GM12878 (cell line): ENCODE measurements at regions of chr17 and their contacts with region 1.

Region 1: GRCh38 chr17:3738562-3739295 is 15.0 kb downstream of the HASPIN start:
- DNase-seq: no peak
- ATAC-seq: peak; percentile 82
- H3K4me3 ChIP-seq: no peak overlapping the region
- H3K27ac ChIP-seq: no peak overlapping the region
- H3K4me1 ChIP-seq: 0 out of 2 replicates have a peak, but pooled peaks cover 2% of the 10 kb centered on the region
- H3K27me3 ChIP-seq: no peaks in the 10 kb centered on the region
- CTCF ChIP-seq: no peak
- EP300 ChIP-seq: no peak
- POLR2A ChIP-seq: no peak
- RAD21 ChIP-seq: no peak

Region 2: DNA sequence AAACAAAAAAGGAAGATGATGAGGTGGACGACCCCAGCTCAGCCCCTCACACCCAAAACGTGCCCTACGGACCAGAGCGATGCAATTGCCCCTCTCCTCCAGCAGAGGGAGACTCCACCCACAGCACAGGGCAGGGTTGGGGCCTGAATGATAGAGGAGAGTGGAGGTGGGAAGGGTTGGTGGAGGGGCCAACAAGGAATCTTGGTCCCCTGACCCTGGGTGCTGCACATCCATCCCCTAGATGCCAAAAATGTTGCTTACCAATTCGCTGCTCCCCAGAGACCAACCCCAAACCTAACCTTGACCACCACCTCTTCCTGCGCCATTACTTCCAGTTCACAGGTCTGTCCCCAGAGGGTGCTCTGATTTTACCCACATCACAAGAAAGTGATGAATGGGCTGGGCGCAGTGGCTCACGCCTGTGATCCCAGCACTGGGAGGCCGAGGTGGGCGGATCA is 55.6 kb before region 1 on chr17:
- CTCF ChIA-PET with region 1: interaction called, 105 read pairs
- POLR2A ChIA-PET with region 1: no interaction called
- RAD21 ChIA-PET with region 1: interaction called, 24 read pairs
- SMC1A ChIA-PET with region 1: interaction called, 17 read pairs
- in situ Hi-C with region 1: no loop called
- intact Hi-C with region 1: loop called (anchors 2 kb)
- DNase-seq: peak; percentile 48
- ATAC-seq: peak; percentile 95
- H3K4me3 ChIP-seq: no peak overlapping the region
- H3K27ac ChIP-seq: no peak overlapping the region
- H3K4me1 ChIP-seq: peaks cover 6% of the 10 kb centered on the region; the same call in 1 of the 2 replicates
- H3K27me3 ChIP-seq: no peaks in the 10 kb centered on the region
- CTCF ChIP-seq: peak; percentile 85 to 98 (median 94)
- EP300 ChIP-seq: no peak
- POLR2A ChIP-seq: peak; percentile 44; the same call in 1 of the 2 replicates
- RAD21 ChIP-seq: peak; percentile 94

Region 3: GRCh38 chr17:3750926-3751325 is 12.2 kb after region 1 on chr17:
- CTCF ChIA-PET with region 1: interaction called, 19 read pairs
- POLR2A ChIA-PET with region 1: no interaction called
- RAD21 ChIA-PET with region 1: interaction called, 8 read pairs
- SMC1A ChIA-PET with region 1: interaction called, 4 read pairs
- in situ Hi-C with region 1: no loop called
- intact Hi-C with region 1: no loop called
- DNase-seq: no peak
- ATAC-seq: peak; percentile 84
- H3K4me3 ChIP-seq: no peak overlapping the region
- H3K27ac ChIP-seq: no peak overlapping the region
- H3K4me1 ChIP-seq: no peaks in the 10 kb centered on the region; the same call in 1 of the 2 replicates
- H3K27me3 ChIP-seq: no peaks in the 10 kb centered on the region
- CTCF ChIP-seq: no peak
- EP300 ChIP-seq: peak in 1 of 2 experiments; percentile 40; a peak in 1 of 4 replicates
- POLR2A ChIP-seq: no peak
- RAD21 ChIP-seq: no peak

Region 4: GRCh38 chr17:3804503-3804931 is 65.8 kb after region 1 on chr17:
- CTCF ChIA-PET with region 1: interaction called, 32 read pairs
- POLR2A ChIA-PET with region 1: no interaction called
- RAD21 ChIA-PET with region 1: interaction called, 20 read pairs
- SMC1A ChIA-PET with region 1: interaction called, 22 read pairs
- in situ Hi-C with region 1: no loop called
- intact Hi-C with region 1: loop called (anchors 5 kb)
- DNase-seq: peak; percentile 63
- ATAC-seq: peak; percentile 95
- H3K4me3 ChIP-seq: peak overlapping the region; percentile 28; the same call in 1 of the 2 replicates
- H3K27ac ChIP-seq: peak overlapping the region; percentile 67
- H3K4me1 ChIP-seq: peaks cover 18% of the 10 kb centered on the region
- H3K27me3 ChIP-seq: no peaks in the 10 kb centered on the region
- CTCF ChIP-seq: no peak
- EP300 ChIP-seq: no peak
- POLR2A ChIP-seq: no peak
- RAD21 ChIP-seq: no peak

Region 5: DNA sequence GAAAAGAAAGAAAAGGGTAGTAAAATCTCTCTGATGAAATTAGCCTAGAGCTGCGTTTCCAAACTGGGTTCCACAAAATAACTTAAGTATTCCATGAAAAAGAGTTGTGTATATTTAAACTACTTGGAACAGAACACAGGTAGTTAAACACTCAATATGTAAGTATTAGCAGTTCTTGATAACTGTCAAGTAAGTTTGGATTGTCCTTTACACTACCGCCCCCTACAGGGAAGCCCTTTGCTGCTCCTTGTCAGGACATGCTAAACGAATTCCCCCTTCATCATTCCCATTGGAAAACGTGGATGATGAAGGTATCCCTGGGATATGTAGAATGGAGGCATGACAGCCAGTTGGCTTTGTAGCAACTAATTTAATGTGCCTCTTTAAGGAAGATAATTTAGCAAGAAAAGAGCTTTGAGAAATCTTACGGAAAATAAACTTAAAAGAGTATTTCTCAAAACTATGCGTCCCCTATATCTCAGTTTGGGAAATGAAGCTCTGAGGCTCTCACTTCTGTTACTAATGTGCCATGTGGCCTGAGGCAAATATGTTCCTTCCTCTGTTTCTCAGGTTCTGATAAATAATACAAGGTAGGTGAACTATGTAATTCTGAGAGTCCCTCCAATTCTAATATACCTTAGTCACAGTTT is 88.5 kb after region 1 on chr17:
- CTCF ChIA-PET with region 1: interaction called, 371 read pairs
- POLR2A ChIA-PET with region 1: interaction called, 14 read pairs
- RAD21 ChIA-PET with region 1: interaction called, 191 read pairs
- SMC1A ChIA-PET with region 1: interaction called, 255 read pairs
- in situ Hi-C with region 1: loop called (anchors 5 kb)
- intact Hi-C with region 1: loop called (anchors 1 kb)
- DNase-seq: no peak
- ATAC-seq: peak; percentile 65
- H3K4me3 ChIP-seq: no peak overlapping the region
- H3K27ac ChIP-seq: no peak overlapping the region
- H3K4me1 ChIP-seq: no peaks in the 10 kb centered on the region
- H3K27me3 ChIP-seq: no peaks in the 10 kb centered on the region
- CTCF ChIP-seq: peak; percentile 82 to 85 (median 82)
- EP300 ChIP-seq: no peak
- POLR2A ChIP-seq: no peak
- RAD21 ChIP-seq: peak; percentile 90

Region 6: DNA sequence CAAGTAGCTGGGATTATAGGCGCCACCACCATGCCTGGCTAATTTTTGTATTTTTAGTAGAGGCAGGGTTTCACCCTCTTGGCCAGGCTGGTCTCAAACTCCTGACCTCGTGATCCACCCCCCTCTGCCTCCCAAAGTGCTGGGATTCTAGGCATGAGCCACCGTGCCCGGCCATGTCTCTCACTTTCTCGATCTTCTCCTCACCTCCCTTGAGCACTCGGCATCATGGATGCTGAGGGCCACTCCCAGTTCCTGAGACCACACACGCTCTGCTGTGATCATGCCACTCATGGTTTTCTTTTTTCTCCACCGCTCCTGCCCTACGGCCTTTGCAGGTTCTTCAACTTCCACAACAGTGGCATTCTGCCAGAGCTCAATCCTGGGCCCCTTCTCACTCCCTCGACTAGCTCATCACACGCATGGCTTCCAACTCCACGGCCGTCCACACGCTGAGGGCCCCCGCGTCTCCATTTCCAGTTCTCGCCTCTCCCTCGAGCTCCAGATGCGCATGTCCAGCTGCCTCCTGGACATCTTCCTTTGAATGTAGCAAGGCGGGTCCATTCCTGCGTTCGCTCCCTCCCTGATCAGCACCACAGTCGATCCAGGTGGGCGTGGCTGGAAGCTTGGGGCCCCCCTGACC is 112.9 kb after region 1 on chr17:
- CTCF ChIA-PET with region 1: interaction called, 115 read pairs
- POLR2A ChIA-PET with region 1: no interaction called
- RAD21 ChIA-PET with region 1: interaction called, 59 read pairs
- SMC1A ChIA-PET with region 1: interaction called, 79 read pairs
- in situ Hi-C with region 1: no loop called
- intact Hi-C with region 1: no loop called
- DNase-seq: no peak
- ATAC-seq: no peak
- H3K4me3 ChIP-seq: no peak overlapping the region
- H3K27ac ChIP-seq: no peak overlapping the region
- H3K4me1 ChIP-seq: no peaks in the 10 kb centered on the region
- H3K27me3 ChIP-seq: no peaks in the 10 kb centered on the region; a peak in 1 of 4 replicates
- CTCF ChIP-seq: no peak
- EP300 ChIP-seq: no peak
- POLR2A ChIP-seq: no peak
- RAD21 ChIP-seq: no peak

Region 7: GRCh38 chr17:4074831-4075495 is 336.2 kb after region 1 on chr17:
- CTCF ChIA-PET with region 1: interaction called, 4 read pairs
- POLR2A ChIA-PET with region 1: no interaction called
- RAD21 ChIA-PET with region 1: interaction called, 11 read pairs
- SMC1A ChIA-PET with region 1: interaction called, 4 read pairs
- in situ Hi-C with region 1: no loop called
- intact Hi-C with region 1: loop called (anchors 10 kb)
- DNase-seq: peak; percentile 25
- ATAC-seq: peak; percentile 68
- H3K4me3 ChIP-seq: peak overlapping the region; percentile 24; the same call in 1 of the 2 replicates
- H3K27ac ChIP-seq: peak overlapping the region; percentile 77
- H3K4me1 ChIP-seq: peaks cover 33% of the 10 kb centered on the region
- H3K27me3 ChIP-seq: no peaks in the 10 kb centered on the region
- CTCF ChIP-seq: peak; percentile 77 to 82 (median 79)
- EP300 ChIP-seq: no peak
- POLR2A ChIP-seq: no peak
- RAD21 ChIP-seq: peak; percentile 79